Activated CD4-positive, alpha-beta T cell treated with anti-CD3 and anti-CD28 coated beads for 36 hours (primary cell): ENCODE measurements at regions of chr2 and their contacts with region 1.

Region 1: GRCh38 chr2:113876503-113877387 is 13.1 kb upstream of the ACTR3 start:
- DNase-seq: peak; percentile 92
- ATAC-seq: peak; percentile 93
- H3K4me3 Mint-ChIP-seq: peak overlapping the region; percentile 27
- H3K27ac Mint-ChIP-seq: peak overlapping the region; percentile 79
- H3K4me1 Mint-ChIP-seq: peaks cover 43% of the 10 kb centered on the region
- H3K27me3 Mint-ChIP-seq: no peaks in the 10 kb centered on the region

Region 2: GRCh38 chr2:113791697-113792590 is 84.8 kb before region 1 on chr2:
- CTCF ChIA-PET with region 1: no interaction called
- POLR2A ChIA-PET with region 1: no interaction called
- intact Hi-C with region 1: loop called in 1 of 2 experiments (anchors 2 kb)
- DNase-seq: peak; percentile 20
- ATAC-seq: peak; percentile 86
- H3K4me3 Mint-ChIP-seq: peak overlapping the region; percentile 4
- H3K27ac Mint-ChIP-seq: peak overlapping the region; percentile 89
- H3K4me1 Mint-ChIP-seq: peaks cover 34% of the 10 kb centered on the region
- H3K27me3 Mint-ChIP-seq: no peaks in the 10 kb centered on the region